ENCODE measurements at regions of chr5 and their contacts with region 1.

Region 1: DNA sequence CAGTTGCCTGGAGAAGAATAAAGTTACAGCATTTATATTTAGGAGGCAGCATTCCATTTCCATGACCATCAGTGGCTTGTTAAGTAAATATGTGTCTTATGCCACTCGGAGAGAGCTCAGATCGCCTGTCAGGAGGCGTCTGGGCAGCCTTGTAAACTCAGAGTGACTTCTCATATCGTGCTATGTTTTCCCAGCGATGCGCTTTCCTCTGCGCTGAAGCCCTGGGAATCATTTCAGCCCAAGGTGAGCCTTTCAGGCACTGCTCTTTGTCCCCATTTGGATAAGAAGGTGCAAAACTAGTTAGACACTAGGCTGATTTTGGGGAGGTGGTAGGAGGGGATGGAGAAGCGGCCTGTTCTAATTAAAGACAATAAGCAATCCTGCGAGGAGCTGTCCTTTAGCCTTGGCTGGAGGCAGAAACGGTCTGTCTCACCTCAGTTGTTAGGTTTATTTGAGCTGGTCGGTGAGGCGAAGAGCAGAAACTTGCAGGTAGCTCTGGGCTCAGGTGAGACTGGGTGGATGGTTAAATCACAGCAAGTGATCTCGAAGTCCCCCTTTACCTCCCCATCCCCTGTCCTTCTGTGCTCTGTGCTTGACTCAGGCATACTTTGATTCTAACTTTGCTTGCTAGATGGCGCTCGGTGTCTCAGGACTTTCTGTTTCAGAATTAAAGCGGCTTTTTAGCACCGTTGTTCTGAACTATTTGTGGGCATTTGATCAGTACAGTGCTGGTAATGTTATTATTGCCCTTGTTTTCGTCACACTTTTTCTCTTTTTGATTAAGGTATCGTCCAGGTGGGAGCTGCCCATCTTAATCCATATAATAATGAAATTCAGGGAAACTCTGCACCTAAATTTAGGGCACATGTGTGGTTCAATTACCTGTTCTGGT is 24.6 kb downstream of the NR2F1 start:
- DNase-seq: no peak
- H3K4me3 Mint-ChIP-seq: no peak overlapping the region
- H3K27ac Mint-ChIP-seq: no peak overlapping the region
- H3K4me1 Mint-ChIP-seq: peaks cover 7% of the 10 kb centered on the region
- H3K27me3 Mint-ChIP-seq: peaks cover 75% of the 10 kb centered on the region

Region 2: DNA sequence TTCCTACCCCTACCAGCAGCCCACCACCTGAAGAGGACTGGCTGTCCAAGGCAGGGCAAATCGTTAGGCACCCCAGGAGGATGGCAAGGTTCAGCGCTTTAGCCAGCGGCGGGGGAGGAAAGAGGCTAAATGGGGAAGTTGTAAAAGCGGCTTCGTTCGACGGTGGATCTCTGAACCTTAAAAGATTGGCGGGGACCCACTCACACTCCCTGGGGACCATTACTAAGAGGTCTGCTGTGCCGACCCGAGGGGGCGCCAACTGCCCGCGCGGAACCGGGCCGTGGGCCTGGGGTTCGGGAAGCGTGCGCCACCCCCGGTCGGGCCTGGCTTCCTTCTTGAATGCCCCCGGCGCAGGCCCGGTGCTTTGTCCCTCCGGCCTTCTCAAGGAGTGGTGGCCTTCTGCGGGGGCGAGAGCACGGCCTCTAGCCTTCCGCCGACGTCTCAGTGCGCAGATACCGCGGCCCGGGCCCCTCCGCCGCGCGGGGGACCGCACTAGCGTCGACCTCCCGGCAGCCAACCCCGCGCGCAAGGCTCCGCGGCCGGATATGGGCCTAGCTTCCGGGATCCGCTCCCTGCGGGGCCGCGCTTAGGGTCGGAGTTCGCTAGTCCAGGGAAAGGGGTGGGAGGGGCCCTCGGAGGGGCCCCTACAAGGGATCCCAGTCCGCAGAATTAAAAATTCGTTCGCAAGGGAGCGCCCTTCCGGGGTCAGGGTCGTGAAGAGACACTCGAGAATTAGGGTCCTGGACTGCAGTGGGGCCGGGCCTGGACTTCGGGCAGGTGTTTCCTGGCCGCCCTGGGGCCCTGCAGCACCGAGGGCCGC is 37.1 kb before region 1 on chr5:
- intact Hi-C with region 1: loop called (anchors 2 kb)
- DNase-seq: no peak
- H3K4me3 Mint-ChIP-seq: no peak overlapping the region
- H3K27ac Mint-ChIP-seq: no peak overlapping the region
- H3K4me1 Mint-ChIP-seq: no peaks in the 10 kb centered on the region
- H3K27me3 Mint-ChIP-seq: peaks cover 68% of the 10 kb centered on the region

Region 3: DNA sequence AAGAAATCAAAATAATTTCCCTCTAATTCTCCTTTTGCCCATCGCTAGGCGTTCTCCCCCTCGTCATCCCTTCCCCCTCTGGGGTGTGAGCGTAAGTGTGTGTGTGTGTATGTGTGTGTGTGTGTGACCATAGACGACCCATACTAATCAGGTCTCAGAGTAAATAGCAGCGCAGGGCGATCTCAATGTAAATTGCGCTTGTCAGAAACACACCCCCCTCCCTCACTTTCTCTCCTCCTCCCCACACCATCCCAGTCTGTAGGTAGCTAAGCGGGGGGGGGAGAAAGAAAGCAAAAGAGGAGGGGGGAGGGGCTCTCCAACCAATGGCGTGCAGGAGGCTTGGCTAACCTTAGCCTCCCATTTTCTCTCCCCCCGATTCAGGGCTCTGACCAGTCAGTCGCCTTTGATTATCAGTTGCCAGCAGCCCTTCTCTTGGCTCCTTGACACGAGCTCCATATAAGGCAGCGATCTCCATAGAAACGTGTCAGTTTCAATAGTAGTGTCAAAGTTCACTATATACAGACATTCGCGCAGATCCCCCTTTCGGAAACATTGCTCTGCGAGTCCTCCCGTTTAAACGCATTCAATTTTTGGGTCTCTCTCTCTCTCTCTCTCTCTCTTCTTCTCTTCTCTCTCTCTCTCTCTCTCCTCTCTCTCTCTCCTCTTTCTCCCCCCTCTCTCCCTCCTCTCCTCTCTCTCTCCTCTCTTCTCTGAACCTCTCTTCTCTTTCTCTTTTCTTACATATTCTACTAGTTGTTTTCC is 24.8 kb before region 1 on chr5 and contains the start of gene NR2F1:
- intact Hi-C with region 1: loop called (anchors 1 kb)
- DNase-seq: no peak
- H3K4me3 Mint-ChIP-seq: peak within 1 kb of the TSS; percentile 33
- H3K27ac Mint-ChIP-seq: no peak within 1 kb of the TSS
- H3K4me1 Mint-ChIP-seq: peaks cover 18% of the 10 kb centered on the region
- H3K27me3 Mint-ChIP-seq: peaks cover 46% of the 10 kb centered on the region
- total RNA-seq, gene NR2F1: not detected in 2 replicates

Region 4: DNA sequence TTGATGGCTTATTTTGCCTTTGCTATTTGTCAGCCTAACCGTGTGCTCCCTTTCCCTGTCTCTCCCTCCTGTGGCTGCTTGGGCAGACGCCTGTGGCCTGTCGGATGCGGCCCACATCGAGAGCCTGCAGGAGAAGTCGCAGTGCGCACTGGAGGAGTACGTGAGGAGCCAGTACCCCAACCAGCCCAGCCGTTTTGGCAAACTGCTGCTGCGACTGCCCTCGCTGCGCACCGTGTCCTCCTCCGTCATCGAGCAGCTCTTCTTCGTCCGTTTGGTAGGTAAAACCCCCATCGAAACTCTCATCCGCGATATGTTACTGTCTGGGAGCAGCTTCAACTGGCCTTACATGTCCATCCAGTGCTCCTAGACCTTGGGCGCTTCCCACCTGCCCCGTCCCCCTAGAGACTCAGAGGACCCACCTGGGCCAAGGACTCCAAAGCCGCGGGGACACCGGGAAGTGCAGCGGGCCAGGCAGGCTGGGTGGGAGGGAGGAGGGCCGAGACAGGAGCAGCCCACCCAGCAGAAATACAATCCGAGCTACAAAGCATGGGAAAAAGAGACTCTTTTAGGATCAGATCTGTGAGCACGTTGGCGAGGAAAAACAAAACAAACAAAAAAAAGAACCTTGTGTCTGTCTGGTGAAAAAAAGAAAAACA is 14.0 kb before region 1 on chr5:
- intact Hi-C with region 1: no loop called
- DNase-seq: no peak
- H3K4me3 Mint-ChIP-seq: no peak overlapping the region
- H3K27ac Mint-ChIP-seq: no peak overlapping the region
- H3K4me1 Mint-ChIP-seq: peaks cover 2% of the 10 kb centered on the region
- H3K27me3 Mint-ChIP-seq: peaks cover 79% of the 10 kb centered on the region

Region 5: DNA sequence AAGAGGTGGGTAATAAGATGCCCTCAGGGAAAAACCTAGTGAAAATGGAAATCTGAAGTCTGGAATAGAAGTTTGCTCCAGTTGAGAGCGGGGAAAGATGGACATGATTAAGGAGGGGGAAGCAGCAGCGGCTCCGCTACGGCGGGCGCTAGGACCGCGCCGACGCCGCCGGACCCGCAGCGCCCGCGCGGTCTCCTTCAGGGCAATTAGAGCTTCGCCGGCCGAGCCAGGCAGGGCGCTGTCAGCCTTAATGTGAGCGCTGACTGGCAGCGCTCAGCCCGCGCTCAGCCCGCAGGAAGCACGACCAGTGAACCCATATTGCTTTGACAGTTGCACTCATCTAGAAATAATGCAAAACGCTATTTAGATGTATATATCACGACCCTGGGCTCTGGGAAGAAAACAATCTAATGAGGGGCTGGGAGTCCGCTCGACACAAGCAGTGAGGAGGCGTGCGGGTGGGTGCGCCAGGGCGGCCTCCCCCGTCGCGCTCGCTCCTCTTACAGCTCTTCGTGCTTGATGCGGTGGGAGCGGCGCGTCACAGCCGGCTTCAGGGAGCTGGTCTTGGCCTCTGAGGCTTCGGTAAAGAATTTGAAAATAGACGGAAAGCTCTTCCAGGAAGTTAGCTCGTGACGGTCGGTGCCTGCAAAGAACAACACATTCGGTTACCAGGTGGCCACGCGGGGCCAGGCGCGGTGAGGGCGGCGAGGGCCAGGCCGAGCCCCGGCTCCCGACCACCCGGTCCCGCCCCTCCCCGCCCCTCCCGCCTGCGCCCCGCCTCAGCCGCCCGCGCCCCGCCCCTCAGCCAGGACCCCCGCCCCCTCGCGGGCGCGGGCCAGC is 13.1 kb after region 1 on chr5:
- intact Hi-C with region 1: loop called (anchors 1 kb)
- DNase-seq: peak; percentile 34
- H3K4me3 Mint-ChIP-seq: peak overlapping the region; percentile 84
- H3K27ac Mint-ChIP-seq: no peak overlapping the region
- H3K4me1 Mint-ChIP-seq: peaks cover 11% of the 10 kb centered on the region
- H3K27me3 Mint-ChIP-seq: peaks cover 62% of the 10 kb centered on the region

Region 6: DNA sequence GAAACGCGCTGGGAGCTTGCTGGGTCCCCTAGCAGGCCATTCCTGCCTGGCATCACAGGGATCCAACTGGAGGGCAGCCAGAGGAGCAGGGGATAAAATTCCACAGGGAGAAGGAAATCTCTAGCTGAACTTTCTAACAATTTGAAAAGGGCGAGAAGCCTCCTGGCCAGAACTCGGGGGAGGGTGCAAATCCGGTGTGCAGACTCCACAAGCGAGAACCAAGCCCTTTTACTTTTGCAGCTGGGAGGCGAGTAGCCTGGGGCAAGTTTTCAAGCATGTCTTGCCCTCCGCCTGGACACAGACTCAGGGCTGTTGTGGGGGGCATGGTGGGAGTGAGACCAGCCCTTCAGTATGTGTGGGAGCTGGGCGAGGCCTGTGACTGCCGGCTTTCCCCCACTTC is 148.1 kb after region 1 on chr5:
- intact Hi-C with region 1: no loop called
- DNase-seq: no peak
- H3K4me3 Mint-ChIP-seq: no peak overlapping the region
- H3K27ac Mint-ChIP-seq: no peak overlapping the region
- H3K4me1 Mint-ChIP-seq: peaks cover 3% of the 10 kb centered on the region
- H3K27me3 Mint-ChIP-seq: no peaks in the 10 kb centered on the region

Region 7: DNA sequence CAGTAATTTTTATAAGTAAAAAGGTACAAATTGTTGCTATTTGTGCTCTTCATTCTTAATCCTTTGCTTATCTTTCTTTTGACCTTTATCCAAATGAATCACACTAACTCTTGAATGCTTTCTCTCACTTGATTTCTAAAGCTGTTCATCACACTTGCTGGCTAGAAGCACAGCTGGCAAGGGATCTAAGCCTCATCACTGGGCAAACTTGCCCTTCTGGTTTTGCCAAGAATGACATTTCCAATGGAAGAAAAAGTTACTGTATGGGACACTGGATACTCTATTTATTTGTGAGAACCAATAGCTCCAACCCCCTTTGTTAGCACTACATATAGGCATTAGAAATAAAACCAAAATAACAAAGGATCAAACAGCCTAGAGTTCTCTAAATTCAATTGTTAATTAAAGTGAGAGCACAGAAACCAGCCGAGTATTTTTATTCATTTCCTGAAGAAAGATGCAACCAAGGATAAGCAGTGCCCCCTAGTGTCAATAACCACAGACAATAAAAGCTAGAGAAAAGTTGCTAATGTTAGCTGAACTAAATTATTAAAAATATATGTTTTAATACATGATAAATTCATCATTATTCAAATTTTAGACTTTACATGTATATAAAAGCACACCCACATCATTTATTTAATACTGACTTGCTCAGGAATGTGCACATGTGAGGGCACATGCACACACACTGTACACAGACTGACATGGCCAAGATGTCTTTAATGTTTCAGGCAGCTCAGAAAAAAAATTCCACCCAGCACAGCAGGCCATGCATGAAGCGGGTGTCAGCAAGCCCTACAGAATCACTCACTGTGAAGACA is 193.6 kb after region 1 on chr5:
- intact Hi-C with region 1: loop called (anchors 1 kb)
- DNase-seq: no peak
- H3K4me3 Mint-ChIP-seq: no peak overlapping the region
- H3K27ac Mint-ChIP-seq: no peak overlapping the region
- H3K4me1 Mint-ChIP-seq: peaks cover 2% of the 10 kb centered on the region
- H3K27me3 Mint-ChIP-seq: no peaks in the 10 kb centered on the region

Region 8: DNA sequence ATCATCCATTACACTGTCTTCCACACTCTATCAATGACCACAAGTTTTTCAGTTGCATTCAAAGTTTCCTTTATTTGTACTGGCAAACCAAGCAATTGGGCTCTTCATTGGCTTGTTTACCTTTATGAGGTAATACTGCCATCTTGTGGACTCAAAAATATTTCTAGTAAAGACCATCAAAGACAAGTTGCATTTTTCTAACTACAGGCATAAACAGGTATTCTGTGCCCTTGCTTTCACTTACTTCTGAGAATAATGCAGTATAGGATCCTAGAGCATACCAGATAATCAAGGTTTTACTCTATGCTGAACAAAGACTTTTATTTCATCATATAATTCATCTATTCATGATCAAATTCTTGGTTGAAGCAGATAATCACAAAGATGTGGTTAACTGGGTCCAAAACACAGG is 307.5 kb after region 1 on chr5:
- intact Hi-C with region 1: loop called (anchors 1 kb)
- DNase-seq: no peak
- H3K4me3 Mint-ChIP-seq: no peak overlapping the region
- H3K27ac Mint-ChIP-seq: no peak overlapping the region
- H3K4me1 Mint-ChIP-seq: no peaks in the 10 kb centered on the region
- H3K27me3 Mint-ChIP-seq: no peaks in the 10 kb centered on the region

Region 9: GRCh38 chr5:94849821-94850736 is 1242.5 kb after region 1 on chr5:
- intact Hi-C with region 1: loop called (anchors 2 kb)
- DNase-seq: no peak
- H3K4me3 Mint-ChIP-seq: no peak overlapping the region
- H3K27ac Mint-ChIP-seq: no peak overlapping the region
- H3K4me1 Mint-ChIP-seq: peaks cover 2% of the 10 kb centered on the region
- H3K27me3 Mint-ChIP-seq: peaks cover 13% of the 10 kb centered on the region